Astrocyte of the cerebellum (primary cell): ENCODE measurements at regions of chr13 and their contacts with region 1.

Region 1: DNA sequence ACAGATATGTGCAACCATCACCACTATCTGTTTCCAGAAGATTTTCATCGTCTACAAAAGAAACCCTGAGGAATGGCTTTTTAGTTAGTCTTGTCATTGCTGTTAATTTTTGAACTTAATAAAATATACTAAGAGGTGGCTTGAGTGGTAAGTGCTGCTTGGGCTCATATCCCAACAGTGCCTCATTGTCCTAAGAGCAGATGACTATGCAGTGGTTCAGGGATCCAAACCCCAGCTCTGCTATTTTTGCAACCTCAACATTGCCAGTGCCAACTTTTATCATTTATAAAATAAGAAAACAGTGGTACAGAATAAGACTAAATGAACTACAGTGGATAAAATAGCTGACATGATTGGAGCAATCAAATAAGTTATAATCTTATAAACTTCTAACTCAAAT is 123.2 kb upstream of the SLC7A1 start:
- DNase-seq: no peak
- H3K4me3 ChIP-seq: no peak overlapping the region
- CTCF ChIP-seq: no peak

Region 2: DNA sequence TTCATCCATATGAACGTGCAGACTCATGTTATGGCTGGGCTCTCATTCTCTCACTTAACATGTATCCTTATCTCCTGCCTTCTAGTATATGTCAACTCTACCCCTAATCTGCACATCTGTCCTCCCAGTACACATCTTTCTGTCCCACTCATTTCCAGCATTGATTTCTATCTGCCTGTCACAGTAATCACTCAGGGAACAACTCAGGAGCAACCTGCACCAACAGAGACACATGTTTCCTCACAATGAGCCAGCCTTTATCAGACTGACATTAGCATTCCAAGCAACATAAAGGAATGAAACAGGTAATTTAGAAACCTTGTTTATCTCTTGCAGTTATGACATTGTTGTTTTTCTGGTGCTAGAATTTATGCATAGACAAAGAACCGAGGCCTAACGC is 105.6 kb before region 1 on chr13:
- in situ Hi-C with region 1: loop called (anchors 5 kb)
- DNase-seq: no peak
- H3K4me3 ChIP-seq: no peak overlapping the region
- CTCF ChIP-seq: no peak